ENCODE measurements at regions of chr15 and their contacts with region 1.

Region 1: GRCh38 chr15:68277603-68278344 is at the start of gene FEM1B:
- DNase-seq: peak; percentile 72
- ATAC-seq: peak; percentile 93
- H3K4me3 ChIP-seq: peak within 1 kb of the TSS; percentile 81 to 98
- H3K27ac ChIP-seq: peak within 1 kb of the TSS; percentile 99
- H3K4me1 ChIP-seq: peaks cover 31% of the 10 kb centered on the region
- H3K27me3 ChIP-seq: no peaks in the 10 kb centered on the region
- CTCF ChIP-seq: no peak
- total RNA-seq, gene FEM1B: 34.8 TPM

Region 2: GRCh38 chr15:68210821-68211655 is 66.7 kb before region 1 on chr15:
- CTCF ChIA-PET with region 1: no interaction called
- POLR2A ChIA-PET with region 1: no interaction called
- in situ Hi-C with region 1: no loop called
- intact Hi-C with region 1: no loop called
- DNase-seq: no peak
- ATAC-seq: peak; percentile 80
- H3K4me3 ChIP-seq: no peak overlapping the region
- H3K27ac ChIP-seq: no peak overlapping the region
- H3K4me1 ChIP-seq: peaks cover 2% of the 10 kb centered on the region
- H3K27me3 ChIP-seq: no peaks in the 10 kb centered on the region
- CTCF ChIP-seq: peak; percentile 93

Region 3: DNA sequence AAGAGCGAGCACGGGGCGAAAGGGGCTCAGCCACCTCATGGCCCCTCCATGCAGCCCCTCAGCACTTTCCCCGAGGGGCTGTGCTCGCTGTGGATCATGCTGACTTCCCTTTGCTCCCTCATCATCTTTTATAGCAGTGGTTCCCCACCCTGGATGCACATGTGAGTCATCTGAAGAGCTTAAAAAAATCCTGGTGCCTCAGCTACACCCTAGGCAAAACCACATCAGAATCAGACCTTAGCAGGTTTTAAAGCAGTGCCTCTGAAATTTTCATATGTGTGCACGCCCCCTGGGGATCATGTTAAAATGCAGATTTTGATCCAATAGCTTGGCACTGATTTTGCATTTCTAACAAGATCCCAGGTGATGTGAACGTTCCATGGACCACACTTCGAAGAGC is 50.7 kb after region 1 on chr15:
- CTCF ChIA-PET with region 1: no interaction called
- POLR2A ChIA-PET with region 1: interaction called, 16 read pairs
- in situ Hi-C with region 1: no loop called
- intact Hi-C with region 1: no loop called
- DNase-seq: no peak
- ATAC-seq: no peak
- H3K4me3 ChIP-seq: no peak overlapping the region
- H3K27ac ChIP-seq: no peak overlapping the region
- H3K4me1 ChIP-seq: no peaks in the 10 kb centered on the region
- H3K27me3 ChIP-seq: no peaks in the 10 kb centered on the region; the same call in 1 of the 2 replicates
- CTCF ChIP-seq: no peak

Measured in Panc1 (cell line).